Left ventricle myocardium inferior (tissue), 1 donor: ENCODE measurements at regions of chr9 and their contacts with region 1.

Region 1: GRCh38 chr9:19102631-19103345 is at the start of gene HAUS6:
- DNase-seq: peak; percentile 96
- H3K4me3 ChIP-seq: peak within 1 kb of the TSS; percentile 82
- H3K27ac ChIP-seq: peak within 1 kb of the TSS; percentile 94
- H3K4me1 ChIP-seq: peaks cover 29% of the 10 kb centered on the region
- H3K27me3 ChIP-seq: no peaks in the 10 kb centered on the region
- CTCF ChIP-seq: peak; percentile 78
- total RNA-seq, gene HAUS6: 5.6 TPM

Region 2: GRCh38 chr9:19174127-19174912 is 71.5 kb after region 1 on chr9:
- intact Hi-C with region 1: loop called (anchors 10 kb)
- DNase-seq: peak; percentile 62
- H3K4me3 ChIP-seq: no peak overlapping the region
- H3K27ac ChIP-seq: no peak overlapping the region
- H3K4me1 ChIP-seq: peaks cover 20% of the 10 kb centered on the region
- H3K27me3 ChIP-seq: no peaks in the 10 kb centered on the region
- CTCF ChIP-seq: peak; percentile 66

Region 3: GRCh38 chr9:19456996-19457692 is 354.4 kb after region 1 on chr9:
- intact Hi-C with region 1: loop called (anchors 10 kb)
- DNase-seq: peak; percentile 35
- H3K4me3 ChIP-seq: peak overlapping the region; percentile 41
- H3K27ac ChIP-seq: peak overlapping the region; percentile 73
- H3K4me1 ChIP-seq: peaks cover 16% of the 10 kb centered on the region
- H3K27me3 ChIP-seq: no peaks in the 10 kb centered on the region
- CTCF ChIP-seq: peak; percentile 99